Heart left ventricle (tissue), 16 donors: ENCODE measurements at regions of chr16 and their contacts with region 1.

Region 1: DNA sequence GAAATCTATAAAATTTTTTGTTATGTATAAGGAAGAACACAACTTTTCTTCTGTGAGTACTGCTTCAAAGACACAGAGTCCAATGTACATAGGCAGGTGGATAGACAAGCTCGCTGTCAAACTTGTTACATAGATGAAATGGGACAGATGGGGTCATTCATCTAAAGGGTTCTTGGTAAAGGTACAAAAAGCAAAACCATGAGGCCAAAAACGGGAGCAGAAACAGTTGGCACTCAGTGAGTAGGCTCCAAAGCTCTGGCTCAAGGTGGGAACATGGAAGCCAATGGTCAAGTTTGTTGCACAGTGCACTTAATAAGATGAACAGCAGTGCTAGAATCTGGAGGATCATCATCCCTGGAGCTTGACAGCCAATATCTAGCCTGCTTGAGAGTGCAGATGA is 979.0 kb upstream of the EEF2KMT start:
- DNase-seq: no peak
- ATAC-seq: no peak
- H3K4me3 ChIP-seq: no peak overlapping the region
- H3K27ac ChIP-seq: no peak overlapping the region
- H3K4me1 ChIP-seq: no peaks in the 10 kb centered on the region
- H3K27me3 ChIP-seq: no peaks in the 10 kb centered on the region
- CTCF ChIP-seq: no peak
- POLR2A ChIP-seq: no peak

Region 2: GRCh38 chr16:6132121-6132520 is 55.5 kb after region 1 on chr16:
- intact Hi-C with region 1: loop called in 1 of 10 experiments (anchors 10 kb)
- DNase-seq: no peak
- ATAC-seq: no peak
- H3K4me3 ChIP-seq: no peak overlapping the region
- H3K27ac ChIP-seq: no peak overlapping the region
- H3K4me1 ChIP-seq: no peaks in the 10 kb centered on the region
- H3K27me3 ChIP-seq: no peaks in the 10 kb centered on the region
- CTCF ChIP-seq: no peak
- POLR2A ChIP-seq: no peak